Activated T-helper 1 cell treated with anti-CD3 and anti-CD28 coated beads, Interleukin-12 subunit alpha, Interleukin-12 subunit beta, Interleukin-2, Interleukin-4 antibody, amounts not matched to agents 30 ng/mL and 10 ng/mL and 1 ng/mL, durations not matched to agents 14 hours and 24 hours and 36 hours (primary cell): ENCODE measurements at regions of chr1 and their contacts with region 1.

Region 1: GRCh38 chr1:100627054-100627716 is 89.2 kb downstream of the GPR88 start:
- DNase-seq: no peak
- H3K4me3 Mint-ChIP-seq: no peak overlapping the region
- H3K27ac Mint-ChIP-seq: no peak overlapping the region
- H3K4me1 Mint-ChIP-seq: peaks cover 16% of the 10 kb centered on the region
- H3K27me3 Mint-ChIP-seq: peaks cover 4% of the 10 kb centered on the region

Region 2: DNA sequence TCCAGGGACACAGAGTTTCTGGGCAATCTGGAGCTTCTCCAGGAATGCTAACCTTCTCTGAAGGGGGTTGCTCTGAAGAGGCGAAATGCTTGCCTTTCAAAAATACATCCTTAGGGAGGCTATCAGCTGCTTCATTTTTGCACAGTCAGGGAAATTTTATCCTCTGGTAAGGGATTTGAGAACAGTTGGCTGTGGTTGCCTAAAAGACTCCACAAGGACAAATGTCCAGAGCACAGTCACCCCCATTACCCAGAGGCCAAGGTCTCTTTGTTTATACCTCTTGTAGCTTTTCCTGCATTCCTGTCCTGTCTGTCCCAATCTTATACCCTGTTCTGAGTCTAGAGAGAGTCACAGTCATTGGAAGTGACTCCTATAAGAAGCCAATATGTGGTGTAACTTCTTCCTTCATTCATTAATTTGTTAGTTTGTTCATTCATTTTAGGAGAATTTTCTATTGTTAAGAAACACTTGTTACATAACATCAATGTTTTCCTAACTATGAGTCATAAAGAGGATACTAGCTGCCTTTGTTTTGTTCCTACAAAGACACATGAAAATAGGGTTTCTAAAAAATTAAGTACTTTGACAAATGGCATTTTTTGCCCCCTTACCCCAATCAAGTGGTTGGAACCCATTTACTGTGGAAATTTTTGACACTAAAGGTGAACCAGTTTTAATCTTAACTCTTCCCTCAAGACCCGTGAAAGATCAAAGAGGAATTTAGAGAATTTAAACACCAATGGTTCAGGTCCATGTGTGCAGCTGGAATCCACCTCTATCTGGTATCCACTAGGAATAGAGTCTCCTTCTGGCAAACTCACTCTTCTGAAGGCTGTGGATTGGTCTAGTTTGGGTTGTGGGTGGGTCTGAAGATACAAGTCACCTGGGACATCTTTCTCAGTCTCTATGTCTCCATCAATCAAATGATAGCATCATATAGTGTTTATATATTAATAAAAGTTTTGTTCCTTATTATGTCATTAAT is 42.1 kb before region 1 on chr1:
- intact Hi-C with region 1: loop called (anchors 5 kb)
- DNase-seq: no peak
- H3K4me3 Mint-ChIP-seq: no peak overlapping the region
- H3K27ac Mint-ChIP-seq: no peak overlapping the region
- H3K4me1 Mint-ChIP-seq: no peaks in the 10 kb centered on the region
- H3K27me3 Mint-ChIP-seq: peaks cover 5% of the 10 kb centered on the region

Region 3: DNA sequence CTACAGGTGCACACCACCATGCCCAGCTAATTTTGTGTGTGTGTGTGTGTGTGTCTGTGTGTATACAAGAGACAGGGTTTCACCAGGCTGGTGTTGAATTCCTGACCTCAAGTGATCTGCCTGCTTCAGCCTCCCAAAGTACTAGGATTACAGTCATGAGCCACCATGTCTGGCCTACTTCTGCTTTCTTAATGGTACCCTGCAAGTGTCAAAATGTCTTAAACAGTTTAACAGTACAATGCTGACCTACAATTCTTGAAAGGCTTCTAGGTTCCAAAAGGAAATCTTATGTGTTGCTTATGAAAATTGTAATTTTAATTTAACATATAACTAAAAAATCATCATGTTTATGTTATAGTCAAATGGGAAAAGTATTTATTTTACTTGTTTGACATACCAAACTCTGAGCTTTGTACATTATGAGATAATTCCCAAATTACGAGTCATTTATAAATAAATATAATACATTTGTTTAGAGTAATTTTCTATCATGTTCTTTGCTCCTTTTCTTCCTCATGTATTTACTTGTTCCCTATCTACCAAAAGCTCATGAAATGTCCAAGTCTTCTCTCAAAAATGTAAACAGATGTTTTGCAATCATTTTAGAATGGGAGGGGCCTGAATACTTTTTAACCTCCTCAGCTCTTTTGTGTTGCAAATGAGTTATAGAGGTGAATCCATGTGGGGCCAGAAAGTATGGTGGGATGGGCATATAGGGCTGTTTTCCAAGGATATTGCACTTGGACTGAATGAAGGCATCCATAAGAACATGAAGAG is 83.9 kb after region 1 on chr1:
- intact Hi-C with region 1: no loop called
- DNase-seq: no peak
- H3K4me3 Mint-ChIP-seq: no peak overlapping the region
- H3K27ac Mint-ChIP-seq: no peak overlapping the region
- H3K4me1 Mint-ChIP-seq: peaks cover 15% of the 10 kb centered on the region
- H3K27me3 Mint-ChIP-seq: peaks cover 2% of the 10 kb centered on the region

Region 4: GRCh38 chr1:100734676-100735075 is 107.5 kb after region 1 on chr1:
- intact Hi-C with region 1: no loop called
- DNase-seq: no peak
- H3K4me3 Mint-ChIP-seq: no peak overlapping the region
- H3K27ac Mint-ChIP-seq: no peak overlapping the region
- H3K4me1 Mint-ChIP-seq: no peaks in the 10 kb centered on the region
- H3K27me3 Mint-ChIP-seq: no peaks in the 10 kb centered on the region